ENCODE measurements at regions of chr14 and their contacts with region 1.

Region 1: DNA sequence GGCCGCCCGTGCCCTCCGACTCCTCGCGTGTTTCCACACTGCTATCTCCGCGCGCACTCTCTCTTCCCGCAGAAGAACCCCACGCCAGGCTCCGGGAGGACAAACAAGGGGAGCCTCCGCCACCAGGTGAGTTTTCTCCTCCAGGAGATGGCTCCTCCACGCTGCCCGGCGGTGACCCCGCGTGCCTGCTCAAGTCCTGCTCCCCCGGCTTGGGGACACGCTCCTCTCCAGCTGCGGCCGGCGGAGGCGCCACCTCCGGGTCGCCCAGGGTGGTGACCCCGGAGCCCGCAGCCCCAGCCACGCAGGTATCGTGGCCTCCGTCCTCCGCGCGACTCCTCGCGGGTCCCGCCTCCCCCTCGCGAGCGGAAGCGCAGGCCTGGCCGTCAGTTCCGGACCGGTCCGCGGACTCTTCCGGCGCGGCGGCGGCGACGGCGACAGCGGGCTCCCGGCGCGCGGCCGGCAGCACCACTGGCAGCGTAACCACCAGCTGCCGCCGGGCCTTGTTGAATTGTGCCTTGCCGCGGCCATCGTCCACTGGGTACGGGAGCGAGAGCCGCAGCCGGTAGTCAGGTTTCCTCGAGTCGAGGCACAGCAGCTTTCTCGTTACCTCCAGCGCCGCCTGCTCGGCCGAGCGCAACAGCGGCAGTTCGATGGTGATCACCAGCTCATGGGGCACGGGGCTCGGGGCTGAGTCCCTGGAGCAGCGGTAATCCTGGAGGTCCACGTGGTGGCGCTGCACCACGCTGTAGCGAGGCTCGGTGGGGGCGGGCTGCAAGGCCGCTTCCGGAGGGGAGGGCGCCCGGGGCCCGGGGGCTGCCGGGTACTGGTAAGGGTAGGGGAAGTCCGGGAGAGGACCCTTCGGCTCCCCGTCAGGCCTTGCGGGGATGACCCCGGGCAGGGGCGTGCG is 1.2 kb downstream of the DNAAF2 start:
- DNase-seq: peak; percentile 89 to 96 (median 93)
- ATAC-seq: peak; percentile 92
- H3K4me3 ChIP-seq: peak overlapping the region; percentile 99
- H3K4me3 Mint-ChIP-seq: peak overlapping the region; percentile 81 to 99 (median 96)
- H3K27ac ChIP-seq: peak overlapping the region; percentile 96
- H3K27ac Mint-ChIP-seq: peak overlapping the region; percentile 71 to 96 (median 90)
- H3K4me1 ChIP-seq: peaks cover 19 to 29% of the 10 kb centered on the region in 2 donors
- H3K4me1 Mint-ChIP-seq: peaks cover 35 to 71% (median 52%) of the 10 kb centered on the region in 7 donors
- H3K27me3 ChIP-seq: no peaks in the 10 kb centered on the region
- H3K27me3 Mint-ChIP-seq: no peaks in the 10 kb centered on the region

Region 2: GRCh38 chr14:49461529-49462401 is 172.1 kb before region 1 on chr14:
- CTCF ChIA-PET with region 1: interaction called, 3 read pairs
- POLR2A ChIA-PET with region 1: no interaction called
- intact Hi-C with region 1: loop called in 1 of 2 experiments (anchors 5 kb)
- DNase-seq: peak in 7 of 9 donors; percentile 43 to 74 (median 67)
- ATAC-seq: peak; percentile 95
- H3K4me3 ChIP-seq: no peak overlapping the region
- H3K4me3 Mint-ChIP-seq: no peak overlapping the region
- H3K27ac ChIP-seq: no peak overlapping the region
- H3K27ac Mint-ChIP-seq: no peak overlapping the region
- H3K4me1 ChIP-seq: no peaks in the 10 kb centered on the region
- H3K4me1 Mint-ChIP-seq: no peaks in the 10 kb centered on the region
- H3K27me3 ChIP-seq: no peaks in the 10 kb centered on the region
- H3K27me3 Mint-ChIP-seq: peaks cover 0 to 31% (median 6%) of the 10 kb centered on the region in 5 donors

Region 3: DNA sequence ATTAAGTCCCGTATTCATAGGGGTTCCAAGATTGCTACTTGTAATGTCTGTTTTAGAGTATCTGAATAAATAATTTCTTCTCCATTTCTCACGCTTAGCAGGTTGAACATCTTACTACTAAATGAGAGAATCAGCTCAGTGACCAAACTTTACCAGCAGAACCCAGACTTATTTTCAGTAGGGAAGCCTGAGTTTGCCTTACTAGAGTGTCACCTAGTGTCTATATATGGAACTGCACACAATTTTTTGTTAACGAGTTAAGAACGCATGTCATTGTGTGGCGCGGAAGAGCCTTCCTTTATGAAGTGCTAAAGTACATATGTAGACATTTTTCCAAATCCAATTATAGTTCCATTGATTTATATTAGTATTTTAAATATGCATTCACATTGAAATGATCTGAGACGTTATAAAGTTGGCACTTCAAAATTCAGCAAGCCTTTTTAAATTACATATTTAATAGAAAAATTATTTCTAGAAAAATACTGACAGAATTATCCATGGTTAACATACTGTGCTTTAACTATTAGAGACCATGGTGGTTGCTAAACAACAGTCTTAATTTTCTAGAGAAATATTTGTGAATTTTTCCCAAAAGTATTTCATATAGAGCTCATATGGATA is 136.1 kb before region 1 on chr14:
- CTCF ChIA-PET with region 1: no interaction called
- POLR2A ChIA-PET with region 1: no interaction called
- intact Hi-C with region 1: no loop called
- DNase-seq: peak in 7 of 9 donors; percentile 11 to 59 (median 40)
- ATAC-seq: peak; percentile 85
- H3K4me3 ChIP-seq: no peak overlapping the region
- H3K4me3 Mint-ChIP-seq: no peak overlapping the region
- H3K27ac ChIP-seq: no peak overlapping the region
- H3K27ac Mint-ChIP-seq: no peak overlapping the region
- H3K4me1 ChIP-seq: no peaks in the 10 kb centered on the region
- H3K4me1 Mint-ChIP-seq: peaks cover 0 to 5% (median 0%) of the 10 kb centered on the region in 7 donors
- H3K27me3 ChIP-seq: no peaks in the 10 kb centered on the region
- H3K27me3 Mint-ChIP-seq: peaks cover 5 to 32% (median 20%) of the 10 kb centered on the region in 5 donors

Region 4: DNA sequence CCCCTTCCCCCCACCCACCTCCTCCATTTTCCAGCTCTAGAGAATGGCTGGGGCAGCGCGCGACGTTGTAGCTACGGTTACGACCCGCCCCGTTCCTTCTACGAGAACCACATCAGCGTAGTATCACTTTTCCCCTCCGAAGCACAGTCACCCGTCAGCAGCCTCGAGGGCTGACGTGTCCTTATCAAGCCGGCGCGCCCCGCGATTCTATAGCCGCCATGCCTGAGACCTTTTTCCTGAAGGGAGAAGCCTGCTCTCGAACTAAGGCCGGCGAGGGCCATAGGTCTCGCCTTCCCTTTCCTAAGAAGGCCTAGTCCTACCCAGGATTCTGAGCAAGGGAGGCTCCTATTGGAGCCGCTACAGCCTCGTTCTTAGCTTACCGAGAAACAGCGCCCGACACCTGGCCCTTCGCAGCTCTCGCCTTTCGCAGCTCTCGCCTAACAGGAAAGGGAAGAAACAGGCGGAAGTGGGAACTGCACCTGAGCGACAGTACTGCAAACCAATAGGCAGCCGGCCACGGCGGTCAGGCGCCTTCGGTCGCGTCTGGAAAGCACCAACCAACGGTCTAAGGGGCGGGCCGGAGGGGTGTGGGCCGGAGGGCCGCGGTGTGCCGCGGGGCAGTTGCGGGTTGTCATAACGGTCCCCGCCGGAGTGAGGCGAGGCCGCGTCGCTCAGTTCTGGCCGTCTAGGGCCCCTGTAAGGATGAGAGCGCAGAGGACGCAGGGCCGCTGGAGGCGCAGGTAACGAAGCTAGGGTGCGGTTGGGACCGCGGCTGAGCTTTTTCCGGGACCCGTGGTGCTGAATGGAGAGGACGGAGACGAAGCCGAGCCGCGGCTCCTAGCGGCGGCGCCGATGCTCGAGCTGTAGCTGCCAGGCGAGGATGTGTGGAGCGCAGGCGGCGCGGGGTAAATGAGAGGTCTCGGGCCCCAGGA is 13.4 kb before region 1 on chr14 and contains the starts of genes MGAT2 and RPL36AL:
- CTCF ChIA-PET with region 1: interaction called, 37 read pairs
- POLR2A ChIA-PET with region 1: interaction called, 226 read pairs
- intact Hi-C with region 1: loop called (anchors 1 kb)
- DNase-seq: peak; percentile 89 to 95 (median 94)
- ATAC-seq: peak; percentile 92
- H3K4me3 ChIP-seq: peak within 1 kb of the TSS; percentile 98
- H3K4me3 Mint-ChIP-seq: peak within 1 kb of the TSS; percentile 94 to 99 (median 98)
- H3K27ac ChIP-seq: peak within 1 kb of the TSS; percentile 97
- H3K27ac Mint-ChIP-seq: peak within 1 kb of the TSS; percentile 95 to 100 (median 99)
- H3K4me1 ChIP-seq: peaks cover 40 to 42% of the 10 kb centered on the region in 2 donors
- H3K4me1 Mint-ChIP-seq: peaks cover 36 to 75% (median 56%) of the 10 kb centered on the region in 7 donors
- H3K27me3 ChIP-seq: no peaks in the 10 kb centered on the region
- H3K27me3 Mint-ChIP-seq: no peaks in the 10 kb centered on the region
- total RNA-seq, gene MGAT2: 16.8 to 69.3 (median 35.1) TPM
- total RNA-seq, gene RPL36AL: 177 to 429 (median 281) TPM

Region 5: DNA sequence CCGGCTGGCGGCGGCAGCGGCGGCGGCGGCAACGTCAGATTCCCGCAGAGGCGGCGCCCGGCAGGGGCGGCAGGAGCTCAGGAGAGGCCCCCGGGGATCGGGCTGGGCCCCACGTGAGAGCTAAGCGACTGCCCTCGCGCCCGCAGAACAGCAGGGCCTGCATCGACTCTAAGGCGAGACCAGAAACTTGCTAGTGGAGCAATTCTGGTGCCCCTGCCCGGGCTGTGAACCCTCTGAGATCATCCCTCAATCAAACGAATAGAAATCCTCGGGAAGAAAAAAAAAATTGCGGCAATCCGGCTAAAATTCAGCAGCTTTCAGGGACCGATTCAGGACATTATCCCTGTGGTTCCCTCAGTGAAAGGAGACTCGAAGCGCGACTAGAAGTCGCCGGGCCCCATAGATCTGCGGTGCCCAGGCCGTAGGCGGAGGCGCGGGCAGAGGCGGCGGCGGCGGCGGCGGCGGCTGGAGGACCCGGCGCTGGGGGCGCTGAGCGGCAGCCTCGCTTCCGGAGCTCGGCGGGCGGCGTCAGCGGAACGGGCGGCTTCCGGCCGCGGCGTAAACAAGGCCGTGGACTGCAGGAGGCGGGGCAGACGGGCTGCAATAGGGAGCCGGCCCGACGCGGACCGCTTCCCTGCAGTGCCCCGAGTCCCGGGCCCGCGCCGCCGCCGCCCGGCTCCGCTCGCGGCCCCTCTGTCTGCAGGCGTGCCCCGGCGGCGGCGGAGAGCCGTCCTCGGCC is 133.8 kb after region 1 on chr14 and contains the start of gene KLHDC2:
- CTCF ChIA-PET with region 1: interaction called, 4 read pairs
- POLR2A ChIA-PET with region 1: interaction called, 92 read pairs
- intact Hi-C with region 1: loop called (anchors 1 kb)
- DNase-seq: peak; percentile 84 to 94 (median 89)
- ATAC-seq: peak; percentile 88
- H3K4me3 ChIP-seq: peak within 1 kb of the TSS; percentile 62
- H3K4me3 Mint-ChIP-seq: peak within 1 kb of the TSS; percentile 95 to 99 (median 98)
- H3K27ac ChIP-seq: peak within 1 kb of the TSS; percentile 96
- H3K27ac Mint-ChIP-seq: peak within 1 kb of the TSS; percentile 98 to 100 (median 99)
- H3K4me1 ChIP-seq: peaks cover 26 to 27% of the 10 kb centered on the region in 2 donors
- H3K4me1 Mint-ChIP-seq: peaks cover 20 to 46% (median 40%) of the 10 kb centered on the region in 7 donors
- H3K27me3 ChIP-seq: no peaks in the 10 kb centered on the region
- H3K27me3 Mint-ChIP-seq: peaks cover 0 to 2% (median 0%) of the 10 kb centered on the region in 5 donors
- total RNA-seq, gene KLHDC2: 33.2 to 105 (median 84.7) TPM

Region 6: GRCh38 chr14:50109342-50109741 is 475.4 kb after region 1 on chr14:
- CTCF ChIA-PET with region 1: no interaction called
- POLR2A ChIA-PET with region 1: no interaction called
- intact Hi-C with region 1: loop called in 1 of 2 experiments (anchors 1 kb)
- DNase-seq: no peak
- ATAC-seq: no peak
- H3K4me3 ChIP-seq: no peak overlapping the region
- H3K4me3 Mint-ChIP-seq: no peak overlapping the region
- H3K27ac ChIP-seq: no peak overlapping the region
- H3K27ac Mint-ChIP-seq: no peak overlapping the region
- H3K4me1 ChIP-seq: peaks cover under 1 to 4% of the 10 kb centered on the region in 2 donors
- H3K4me1 Mint-ChIP-seq: peaks cover 0 to 21% (median 16%) of the 10 kb centered on the region in 7 donors
- H3K27me3 ChIP-seq: no peaks in the 10 kb centered on the region
- H3K27me3 Mint-ChIP-seq: no peaks in the 10 kb centered on the region

Measured in naive thymus-derived CD4-positive, alpha-beta T cell (primary cell).